HEK293T (cell line): ENCODE measurements at regions of chr12 and their contacts with region 1.

Region 1: DNA sequence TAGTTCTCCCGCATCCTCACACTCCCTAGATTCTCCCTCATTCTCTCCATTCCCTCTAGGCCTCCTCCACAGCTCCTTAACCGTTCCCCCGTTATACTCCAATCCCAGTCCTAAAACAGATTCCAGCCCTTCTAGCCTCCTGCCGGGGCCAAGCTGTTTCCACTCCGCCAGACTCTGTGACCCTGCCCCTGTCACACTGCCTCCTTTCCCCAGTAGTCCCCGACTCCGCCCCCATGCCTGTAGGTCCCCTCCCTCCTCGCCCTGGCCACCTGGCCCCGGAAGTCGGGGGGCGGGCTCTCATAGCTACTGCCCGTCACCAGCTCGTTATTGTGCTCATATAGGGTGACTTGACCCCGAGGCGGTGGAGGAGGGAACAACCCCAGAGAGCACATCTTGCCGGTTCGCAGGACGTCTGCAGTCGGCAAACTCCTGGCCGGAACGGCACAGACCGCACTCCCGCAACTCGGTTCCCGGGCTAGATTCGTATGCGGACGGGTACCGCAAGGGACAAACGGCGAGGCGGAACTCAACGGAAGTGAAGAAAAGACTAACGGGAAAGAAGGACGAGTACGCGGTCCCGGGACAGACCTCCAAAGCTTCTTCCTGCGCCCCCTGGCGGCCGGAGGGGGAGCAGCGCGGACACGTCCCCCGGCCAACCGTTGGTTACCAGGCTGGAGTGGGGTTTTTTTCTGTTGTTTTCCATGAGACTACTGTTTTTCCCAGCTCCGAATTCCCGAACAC is at the start of gene AAAS:
- DNase-seq: peak; percentile 98

Region 2: DNA sequence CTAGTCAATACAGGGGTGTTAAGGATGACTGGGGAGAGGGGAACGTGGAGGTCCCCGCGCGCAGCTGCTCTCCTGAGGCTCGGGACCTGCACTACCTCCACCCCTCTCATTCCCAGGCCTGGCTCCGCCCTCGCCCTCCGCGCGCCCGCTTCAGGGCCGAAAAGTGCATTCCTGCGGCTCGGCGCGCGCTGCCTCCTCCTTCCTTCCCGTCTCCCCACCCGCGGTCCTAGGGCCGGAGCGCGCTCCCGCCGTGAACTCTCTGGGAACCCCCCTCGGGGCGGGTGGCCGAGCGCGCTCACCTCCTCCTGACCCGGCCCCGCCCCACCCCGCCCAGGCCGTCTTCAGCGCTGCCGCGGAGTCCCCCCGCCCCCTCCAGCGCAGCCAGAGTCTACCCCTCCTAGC is 100.4 kb before region 1 on chr12:
- CTCF ChIA-PET with region 1: interaction called, 7 read pairs
- POLR2A ChIA-PET with region 1: interaction called, 11 read pairs
- DNase-seq: peak; percentile 87

Region 3: GRCh38 chr12:53336181-53336681 is 15.0 kb after region 1 on chr12 and contains the start of gene SP7:
- CTCF ChIA-PET with region 1: interaction called, 4 read pairs
- POLR2A ChIA-PET with region 1: interaction called, 15 read pairs
- DNase-seq: no peak

Region 4: DNA sequence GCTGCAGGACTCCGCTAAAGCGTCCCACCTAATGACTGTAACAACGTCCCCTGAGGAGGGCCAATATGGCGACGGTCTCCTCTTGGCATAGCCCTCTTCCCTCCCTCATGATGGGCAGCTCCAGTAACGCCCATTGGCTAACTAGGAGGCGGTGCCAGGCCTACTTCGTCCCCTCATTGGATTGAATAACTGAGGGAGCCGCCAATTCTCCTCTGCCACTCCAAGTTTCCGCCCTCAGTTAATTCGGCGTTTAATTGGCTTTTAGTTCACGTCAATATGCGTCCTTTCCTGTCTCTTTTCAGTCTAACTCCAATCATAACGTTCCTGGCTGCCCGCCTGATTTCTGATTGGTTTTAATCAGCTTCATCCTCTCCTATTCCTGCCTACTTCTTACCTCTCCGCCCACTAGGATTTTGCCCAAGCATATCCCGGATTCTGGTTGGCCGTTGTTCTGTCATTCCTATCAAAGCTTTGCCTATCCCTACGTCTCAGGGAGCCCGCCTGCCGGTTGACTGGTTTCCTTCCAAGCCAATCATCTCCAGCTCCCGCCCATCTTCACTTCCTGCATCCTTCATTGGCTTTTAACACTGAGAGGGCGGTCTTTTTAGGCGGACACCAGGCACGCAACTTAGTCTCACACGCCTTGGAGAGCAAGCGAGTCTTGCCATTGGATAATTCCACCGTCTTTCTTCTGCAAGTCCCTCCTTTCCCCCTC is 58.3 kb after region 1 on chr12:
- CTCF ChIA-PET with region 1: interaction called, 10 read pairs
- POLR2A ChIA-PET with region 1: interaction called, 32 read pairs
- DNase-seq: peak; percentile 89

Region 5: DNA sequence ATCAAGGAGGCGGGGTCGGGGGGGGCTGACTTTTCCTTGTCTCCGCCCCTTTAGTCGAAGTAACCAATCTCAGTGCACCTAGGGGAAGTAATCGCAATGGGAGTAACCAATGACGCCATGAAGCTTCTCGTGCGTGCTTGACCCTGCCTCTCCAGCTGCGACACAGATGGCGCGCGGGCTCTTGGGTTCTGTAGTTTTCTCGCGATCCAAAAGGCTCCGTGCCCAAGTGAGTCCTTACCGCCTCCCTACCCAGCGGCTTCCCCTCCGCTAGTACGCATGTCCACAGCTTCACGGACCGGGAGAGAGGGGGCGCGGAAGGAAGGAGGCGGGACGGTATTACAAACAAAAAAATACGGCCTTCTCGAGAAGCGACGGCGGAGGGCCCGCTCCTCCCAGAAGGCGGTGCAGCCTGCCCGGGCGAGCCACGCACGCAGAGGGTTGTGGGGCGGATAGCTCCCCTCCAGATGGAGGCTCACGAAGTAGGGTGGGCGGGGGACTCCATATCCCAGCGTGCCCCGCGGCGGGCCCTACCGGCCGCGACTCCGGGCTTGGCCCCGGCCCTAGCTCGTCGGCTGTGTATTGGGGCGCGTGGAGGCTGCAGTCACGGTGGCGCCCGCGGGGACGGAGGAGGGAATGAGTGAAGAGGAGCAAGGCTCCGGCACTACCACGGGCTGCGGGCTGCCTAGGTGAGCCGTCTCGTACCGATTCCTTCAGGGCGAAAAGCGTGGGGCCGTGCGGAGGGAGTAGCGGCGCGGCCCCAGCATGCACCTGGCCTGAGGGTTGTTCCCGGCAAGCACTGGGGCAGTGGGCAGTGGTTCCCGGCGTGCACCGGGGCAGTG is 179.8 kb after region 1 on chr12 and contains the start of gene TARBP2:
- CTCF ChIA-PET with region 1: interaction called, 5 read pairs
- POLR2A ChIA-PET with region 1: interaction called, 81 read pairs
- DNase-seq: peak; percentile 92

Region 6: DNA sequence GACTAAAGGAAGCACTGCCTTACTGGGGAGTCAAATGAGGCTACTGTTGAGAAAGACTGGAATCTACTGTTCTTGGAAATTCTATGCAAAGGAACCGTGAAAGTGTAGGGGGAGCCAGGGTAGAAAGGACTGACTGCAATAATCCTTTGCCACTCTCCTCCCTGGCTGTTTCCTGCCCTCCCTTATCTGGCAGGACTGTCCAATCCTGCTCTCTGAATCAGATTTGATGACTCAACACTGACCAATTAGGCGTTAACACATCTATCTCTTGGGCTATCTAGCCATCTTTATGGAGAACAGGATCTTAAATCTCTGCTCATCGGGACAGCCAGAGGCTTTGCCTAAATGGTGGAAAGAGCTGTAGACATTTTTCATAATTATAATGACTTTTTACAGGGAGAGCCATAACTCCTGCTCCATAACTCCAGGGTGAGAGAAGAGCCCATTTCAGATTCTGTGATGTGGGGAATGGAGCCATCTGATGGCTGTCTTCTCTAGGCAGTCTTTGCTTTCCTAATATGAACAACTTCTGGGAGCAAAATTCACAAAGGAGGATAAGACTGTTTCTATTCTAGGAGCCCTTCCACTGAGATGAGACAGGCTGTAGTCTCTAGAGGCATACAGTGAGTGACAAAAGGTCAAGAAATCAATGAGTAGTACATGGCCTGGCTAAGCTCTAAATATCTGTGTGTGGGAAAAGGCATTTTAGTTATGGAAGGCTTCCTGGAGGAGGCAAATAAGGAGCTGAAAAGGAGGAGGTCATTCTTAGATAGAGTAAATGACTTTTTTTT is 499.5 kb after region 1 on chr12:
- CTCF ChIA-PET with region 1: no interaction called
- POLR2A ChIA-PET with region 1: no interaction called
- DNase-seq: peak; percentile 28